Psoas muscle (tissue), 8 donors: ENCODE measurements at regions of chr1 and their contacts with region 1.

Region 1: DNA sequence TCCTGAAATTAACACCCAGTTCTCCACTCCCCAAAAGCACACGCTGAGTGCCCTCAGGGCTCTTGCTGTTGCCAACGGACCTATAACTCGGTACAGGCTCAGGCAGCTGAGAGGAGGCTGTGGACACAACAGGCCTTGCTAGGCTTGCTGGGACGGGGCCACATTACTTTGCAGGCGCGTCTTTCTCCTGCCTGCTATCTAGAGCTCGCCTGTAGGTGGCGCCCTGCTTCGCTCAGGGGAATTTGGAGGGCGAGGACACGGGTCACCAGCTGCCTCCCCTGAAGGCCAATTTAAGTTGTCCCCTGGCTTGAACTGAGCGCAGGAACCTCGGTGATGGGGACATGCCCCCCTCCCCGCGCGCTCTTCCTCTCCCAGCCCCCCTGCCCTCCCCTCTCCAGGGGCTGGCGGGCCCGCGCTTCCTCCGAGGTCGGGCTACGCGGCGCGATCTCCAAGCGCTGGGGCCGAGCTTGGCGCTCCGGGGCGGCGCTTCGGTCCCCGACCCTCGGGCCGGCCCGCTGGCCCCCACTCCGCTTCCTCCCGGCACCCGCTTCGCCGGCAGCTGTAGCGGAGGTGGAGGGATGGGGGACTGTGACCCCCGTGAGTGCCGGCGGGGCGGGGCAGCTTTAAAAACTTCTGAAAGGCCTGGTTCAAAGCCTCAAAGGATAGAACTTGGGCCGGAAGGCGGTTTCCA is 32.4 kb upstream of the NFIA start:
- DNase-seq: peak; percentile 95 to 97
- ATAC-seq: peak; percentile 77 to 86 (median 84)
- H3K4me3 ChIP-seq: peak overlapping the region; percentile 79
- H3K27ac ChIP-seq: peak overlapping the region; percentile 97
- H3K4me1 ChIP-seq: peaks cover 23% of the 10 kb centered on the region
- H3K27me3 ChIP-seq: no peaks in the 10 kb centered on the region
- CTCF ChIP-seq: peak; percentile 97

Region 2: GRCh38 chr1:59971464-59971911 is 1078.5 kb before region 1 on chr1:
- intact Hi-C with region 1: loop called in 1 of 2 experiments (anchors 10 kb)
- DNase-seq: peak; percentile 62 to 79
- ATAC-seq: peak; percentile 79 to 94 (median 84)
- H3K4me3 ChIP-seq: no peak overlapping the region
- H3K27ac ChIP-seq: no peak overlapping the region
- H3K4me1 ChIP-seq: no peaks in the 10 kb centered on the region
- H3K27me3 ChIP-seq: peaks cover 0 to 4% (median 0%) of the 10 kb centered on the region in 3 donors
- CTCF ChIP-seq: peak; percentile 92

Region 3: GRCh38 chr1:61079898-61080336 is 29.9 kb after region 1 on chr1:
- intact Hi-C with region 1: loop called (anchors 1 to 5 kb)
- DNase-seq: peak; percentile 80 to 89
- ATAC-seq: peak; percentile 40 to 65 (median 56)
- H3K4me3 ChIP-seq: peak overlapping the region; percentile 90
- H3K27ac ChIP-seq: peak overlapping the region; percentile 97
- H3K4me1 ChIP-seq: peaks cover 32% of the 10 kb centered on the region
- H3K27me3 ChIP-seq: no peaks in the 10 kb centered on the region
- CTCF ChIP-seq: peak; percentile 28

Region 4: DNA sequence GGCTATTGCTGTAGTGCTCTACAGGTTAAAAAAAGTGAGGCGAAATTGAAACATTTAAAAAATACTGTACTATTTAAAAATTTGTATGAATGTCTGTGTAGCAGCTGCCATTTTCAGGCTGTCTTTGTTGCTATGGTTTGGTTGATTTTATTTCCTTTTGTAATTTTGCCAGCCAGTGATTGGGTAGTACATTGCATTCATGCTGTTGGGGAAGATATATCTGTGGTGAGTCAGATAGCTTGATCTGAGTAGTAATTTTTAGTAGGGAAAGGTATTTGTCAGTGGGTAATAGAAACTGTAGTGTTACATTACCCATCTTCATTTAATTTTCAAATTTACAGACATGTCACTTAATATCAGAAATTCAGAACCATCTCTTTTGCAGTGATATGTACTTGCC is 47.3 kb after region 1 on chr1:
- intact Hi-C with region 1: no loop called
- DNase-seq: no peak
- ATAC-seq: peak; percentile 54 to 66 (median 58)
- H3K4me3 ChIP-seq: no peak overlapping the region
- H3K27ac ChIP-seq: peak overlapping the region; percentile 31
- H3K4me1 ChIP-seq: peaks cover 78% of the 10 kb centered on the region
- H3K27me3 ChIP-seq: no peaks in the 10 kb centered on the region
- CTCF ChIP-seq: no peak

Region 5: GRCh38 chr1:61453111-61453961 is 403.3 kb after region 1 on chr1:
- intact Hi-C with region 1: loop called (anchors 1 to 2 kb)
- DNase-seq: peak; percentile 89 to 92
- ATAC-seq: peak; percentile 71 to 84 (median 74)
- H3K4me3 ChIP-seq: no peak overlapping the region
- H3K27ac ChIP-seq: peak overlapping the region; percentile 74
- H3K4me1 ChIP-seq: peaks cover 60% of the 10 kb centered on the region
- H3K27me3 ChIP-seq: no peaks in the 10 kb centered on the region
- CTCF ChIP-seq: peak; percentile 77

Region 6: GRCh38 chr1:61641578-61642336 is 591.8 kb after region 1 on chr1:
- intact Hi-C with region 1: loop called in 1 of 2 experiments (anchors 5 kb)
- DNase-seq: peak; percentile 73 to 88
- ATAC-seq: peak; percentile 78 to 92 (median 88)
- H3K4me3 ChIP-seq: peak overlapping the region; percentile 45
- H3K27ac ChIP-seq: no peak overlapping the region
- H3K4me1 ChIP-seq: no peaks in the 10 kb centered on the region
- H3K27me3 ChIP-seq: no peaks in the 10 kb centered on the region
- CTCF ChIP-seq: peak; percentile 74

Region 7: GRCh38 chr1:61851849-61852669 is 802.1 kb after region 1 on chr1:
- intact Hi-C with region 1: loop called (anchors 5 to 10 kb)
- DNase-seq: no peak
- ATAC-seq: peak; percentile 47 to 88 (median 68)
- H3K4me3 ChIP-seq: no peak overlapping the region
- H3K27ac ChIP-seq: no peak overlapping the region
- H3K4me1 ChIP-seq: peaks cover 5% of the 10 kb centered on the region
- H3K27me3 ChIP-seq: no peaks in the 10 kb centered on the region
- CTCF ChIP-seq: peak; percentile 73